ENCODE measurements at regions of chr7 and their contacts with region 1.

Region 1: GRCh38 chr7:83976295-83976694 is 218.3 kb downstream of the SEMA3A start:
- DNase-seq: no peak
- ATAC-seq: no peak

Region 2: GRCh38 chr7:84188786-84189405 is 212.6 kb after region 1 on chr7:
- intact Hi-C with region 1: loop called (anchors 2 kb)
- DNase-seq: no peak
- ATAC-seq: no peak

Region 3: DNA sequence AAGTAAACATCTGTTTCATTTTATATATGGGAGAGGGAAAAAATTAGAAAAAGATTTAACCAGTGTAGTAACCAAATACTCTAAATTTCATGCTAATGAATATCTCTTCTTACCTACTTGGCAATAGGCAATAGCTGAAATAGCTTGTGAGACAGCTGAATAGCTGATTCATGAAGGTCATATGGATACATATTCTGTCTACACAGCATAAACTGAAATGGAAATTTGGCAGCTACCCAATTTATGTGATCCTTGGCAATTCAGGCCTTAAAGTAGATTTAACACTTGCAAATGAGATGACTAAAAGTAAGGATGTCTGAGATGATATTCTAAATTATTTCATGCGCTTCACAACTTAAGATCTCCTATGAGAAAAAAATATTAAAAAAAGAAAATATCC is 479.5 kb after region 1 on chr7:
- intact Hi-C with region 1: loop called (anchors 10 kb)
- DNase-seq: no peak
- ATAC-seq: no peak

Region 4: GRCh38 chr7:85023045-85023712 is 1046.9 kb after region 1 on chr7:
- intact Hi-C with region 1: loop called (anchors 2 kb)
- DNase-seq: no peak
- ATAC-seq: no peak

Measured in left ventricle myocardium superior (tissue), 1 donor.